ENCODE measurements at regions of chr1 and their contacts with region 1.

Region 1: DNA sequence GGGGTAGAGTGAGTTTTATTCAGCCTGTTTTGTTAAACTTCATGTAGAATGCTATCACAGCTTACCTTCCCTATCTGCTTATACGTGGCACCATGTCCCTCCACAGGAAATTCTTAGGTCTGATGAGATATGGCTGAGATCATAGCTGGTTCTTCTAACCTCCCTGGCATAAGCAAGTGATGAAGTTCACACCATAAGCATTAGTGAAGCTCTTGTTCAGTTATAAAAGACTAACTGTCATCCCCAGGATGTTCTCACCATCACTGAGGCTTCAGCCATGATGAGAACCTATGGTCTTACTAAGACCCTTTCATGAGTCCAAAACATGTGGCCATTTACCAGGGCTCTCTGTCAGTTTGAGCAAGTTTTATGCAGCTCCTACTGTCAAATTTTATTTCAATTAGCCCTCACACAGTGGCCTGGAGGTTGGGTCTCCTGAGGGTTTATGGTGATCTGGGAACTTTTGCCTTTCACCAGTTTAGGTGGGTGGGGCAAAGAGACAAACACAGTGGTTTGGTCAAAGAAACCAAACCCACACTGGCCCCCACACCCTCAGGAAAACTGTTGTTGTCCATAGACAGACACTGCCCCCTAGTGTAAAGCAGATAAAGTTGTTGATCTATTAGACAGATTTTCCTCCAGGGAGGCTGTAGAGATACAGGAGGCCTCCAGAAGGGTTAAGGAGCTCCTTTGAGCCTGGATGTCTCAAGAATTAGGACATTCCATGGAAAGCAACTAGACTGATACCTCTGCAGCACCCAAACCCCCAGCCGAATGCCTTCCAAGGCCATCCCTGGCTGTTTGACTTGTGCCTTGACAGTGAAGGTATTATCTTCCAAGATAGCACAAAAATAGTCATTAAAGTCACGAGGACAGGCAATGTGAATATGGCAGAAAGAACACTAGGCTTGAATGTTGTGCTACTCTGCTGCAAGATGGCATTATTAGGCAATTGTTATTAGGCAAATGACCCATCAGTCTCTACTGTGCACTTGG is 5.0 kb downstream of the SLC22A15 start:
- DNase-seq: peak in 1 of 10 donors; percentile 14

Region 2: GRCh38 chr1:115807723-115808122 is 173.6 kb before region 1 on chr1:
- intact Hi-C with region 1: loop called (anchors 1 kb)
- DNase-seq: peak in 2 of 10 donors; percentile 36 to 62